ENCODE measurements at regions of chr18 and their contacts with region 1.

Region 1: DNA sequence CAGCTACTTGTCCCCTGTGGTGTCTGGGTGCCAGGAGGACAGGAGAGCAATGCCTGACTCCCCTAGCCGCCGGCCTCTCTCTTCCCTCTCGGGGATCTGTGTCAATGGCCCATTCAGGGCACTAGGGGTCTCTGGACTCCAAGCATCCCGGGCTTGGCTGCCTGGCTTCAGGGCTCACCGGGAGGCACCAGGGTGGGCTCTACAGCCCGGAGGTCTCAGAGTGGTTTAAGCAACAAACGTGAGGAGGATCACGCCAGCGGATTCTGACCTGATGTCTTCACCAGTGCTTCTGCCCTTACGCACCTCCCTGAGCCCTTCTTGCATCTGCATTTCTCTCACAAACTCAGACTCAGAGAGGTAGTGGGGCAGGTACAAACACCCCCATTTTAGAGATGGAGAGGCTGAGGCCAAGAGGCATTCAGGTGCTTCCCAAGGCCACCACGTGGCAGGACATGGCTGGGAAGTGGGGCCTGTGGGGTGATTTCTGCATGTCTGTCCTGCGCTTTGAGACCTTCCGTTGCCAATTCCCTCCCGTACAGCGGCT is 243.0 kb downstream of the CELF4 start:
- DNase-seq: peak; percentile 29 to 85
- H3K4me3 ChIP-seq: no peak overlapping the region
- H3K27ac ChIP-seq: no peak overlapping the region
- H3K4me1 ChIP-seq: peaks cover 0 to 10% (median 5%) of the 10 kb centered on the region in 4 experiments; a peak in 6 of 7 replicates
- H3K27me3 ChIP-seq: no peaks in the 10 kb centered on the region
- CTCF ChIP-seq: peak in 2 of 3 experiments; percentile 83 to 92; a peak in 3 of 4 replicates
- EP300 ChIP-seq: no peak
- POLR2A ChIP-seq: no peak
- RAD21 ChIP-seq: peak; percentile 87 to 92

Region 2: DNA sequence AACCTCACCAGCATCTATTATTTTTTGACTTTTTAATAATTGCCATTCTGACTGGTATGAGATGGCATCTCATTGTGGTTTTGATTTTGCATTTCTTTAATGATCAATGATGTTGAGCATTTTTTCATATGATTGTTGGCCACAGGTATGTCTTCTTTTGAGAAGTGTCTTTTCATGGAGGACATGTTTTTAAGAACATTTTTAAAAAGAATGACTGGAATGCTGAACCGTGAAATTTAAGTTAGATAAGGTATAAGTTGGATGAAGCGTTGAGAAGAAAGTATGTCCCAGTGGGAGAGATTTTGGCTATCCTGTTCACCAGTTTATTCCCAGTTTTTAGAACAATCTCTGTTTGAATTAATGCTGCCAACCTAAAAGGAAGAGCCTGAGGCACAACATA is 122.8 kb before region 1 on chr18:
- CTCF ChIA-PET with region 1: no interaction called
- POLR2A ChIA-PET with region 1: no interaction called
- DNase-seq: no peak
- H3K4me3 ChIP-seq: no peak overlapping the region
- H3K27ac ChIP-seq: no peak overlapping the region
- H3K4me1 ChIP-seq: no peaks in the 10 kb centered on the region
- H3K27me3 ChIP-seq: no peaks in the 10 kb centered on the region
- CTCF ChIP-seq: no peak
- EP300 ChIP-seq: no peak
- POLR2A ChIP-seq: no peak
- RAD21 ChIP-seq: no peak

Region 3: DNA sequence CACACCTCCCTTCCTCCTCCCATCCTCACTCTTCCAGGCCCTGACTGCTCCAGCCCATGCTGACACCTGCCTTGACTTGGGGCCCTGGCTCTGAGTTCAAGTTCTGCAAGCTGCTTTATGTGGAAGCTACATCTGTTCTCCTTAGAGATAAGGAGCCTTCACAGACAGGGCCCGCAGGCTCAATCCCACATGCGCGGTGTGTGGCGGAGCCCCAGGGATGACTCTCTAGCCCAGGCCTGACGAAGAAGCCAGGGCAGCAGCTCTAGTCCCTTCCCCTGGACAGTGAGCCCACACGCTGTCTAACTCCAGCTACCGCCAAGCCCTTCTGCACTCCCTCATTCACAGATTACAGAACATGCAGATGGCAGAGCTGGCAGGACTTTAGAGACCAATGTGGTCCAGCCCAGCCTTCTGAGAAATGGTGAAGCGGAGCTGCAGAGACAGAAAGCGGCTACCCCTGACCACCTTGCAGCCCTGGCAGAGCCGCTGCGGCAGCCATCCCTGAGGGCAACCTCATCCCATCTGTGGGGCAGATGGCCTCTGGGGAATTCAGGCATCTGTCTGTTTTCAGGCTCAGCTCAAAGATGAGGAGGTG is 61.2 kb before region 1 on chr18:
- CTCF ChIA-PET with region 1: interaction called, 11 read pairs
- POLR2A ChIA-PET with region 1: no interaction called
- DNase-seq: no peak
- H3K4me3 ChIP-seq: no peak overlapping the region
- H3K27ac ChIP-seq: no peak overlapping the region
- H3K4me1 ChIP-seq: peaks cover 0 to 4% (median 1%) of the 10 kb centered on the region in 4 experiments; a peak in 2 of 7 replicates
- H3K27me3 ChIP-seq: peaks cover 0 to 2% (median 0%) of the 10 kb centered on the region in 4 experiments; a peak in 2 of 7 replicates
- CTCF ChIP-seq: no peak
- EP300 ChIP-seq: no peak
- POLR2A ChIP-seq: no peak
- RAD21 ChIP-seq: no peak

Region 4: DNA sequence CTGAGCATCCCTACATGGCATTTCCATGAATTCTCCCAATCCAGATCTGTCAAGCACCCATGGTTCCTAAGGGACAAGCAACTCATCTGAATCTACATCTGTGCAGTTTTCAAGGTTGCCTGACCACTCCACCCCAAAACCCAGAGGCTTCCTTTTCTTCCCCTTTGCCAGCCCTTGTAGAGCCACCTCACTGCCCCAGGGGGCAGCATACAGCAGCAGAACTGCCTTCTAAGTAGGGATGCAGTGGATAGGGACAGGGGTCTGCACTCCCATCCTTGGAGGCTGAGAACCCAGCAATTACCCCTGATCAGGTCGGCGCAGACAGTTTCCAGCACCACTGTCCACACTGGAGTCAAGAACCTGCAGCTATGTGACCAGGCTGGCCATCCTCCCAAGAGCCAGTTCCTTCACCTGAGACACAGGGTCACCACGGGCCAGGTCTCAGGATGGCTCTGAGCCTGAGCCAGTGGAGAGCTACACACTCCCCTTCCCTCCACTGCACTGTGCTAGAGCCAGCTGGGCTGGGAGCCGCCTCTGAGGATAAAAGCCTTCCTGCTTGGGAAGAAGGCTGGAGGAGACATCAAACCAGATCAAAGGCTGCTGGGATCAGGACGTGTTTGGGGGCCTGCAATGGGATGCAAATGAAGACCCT is 40.1 kb before region 1 on chr18:
- CTCF ChIA-PET with region 1: interaction called, 12 read pairs
- POLR2A ChIA-PET with region 1: no interaction called
- DNase-seq: no peak
- H3K4me3 ChIP-seq: no peak overlapping the region
- H3K27ac ChIP-seq: no peak overlapping the region
- H3K4me1 ChIP-seq: peaks cover 0 to 3% (median 0%) of the 10 kb centered on the region in 4 experiments; a peak in 2 of 7 replicates
- H3K27me3 ChIP-seq: no peaks in the 10 kb centered on the region; a peak in 1 of 7 replicates
- CTCF ChIP-seq: peak; percentile 76 to 83 (median 82)
- EP300 ChIP-seq: no peak
- POLR2A ChIP-seq: no peak
- RAD21 ChIP-seq: peak; percentile 56 to 71

Region 5: DNA sequence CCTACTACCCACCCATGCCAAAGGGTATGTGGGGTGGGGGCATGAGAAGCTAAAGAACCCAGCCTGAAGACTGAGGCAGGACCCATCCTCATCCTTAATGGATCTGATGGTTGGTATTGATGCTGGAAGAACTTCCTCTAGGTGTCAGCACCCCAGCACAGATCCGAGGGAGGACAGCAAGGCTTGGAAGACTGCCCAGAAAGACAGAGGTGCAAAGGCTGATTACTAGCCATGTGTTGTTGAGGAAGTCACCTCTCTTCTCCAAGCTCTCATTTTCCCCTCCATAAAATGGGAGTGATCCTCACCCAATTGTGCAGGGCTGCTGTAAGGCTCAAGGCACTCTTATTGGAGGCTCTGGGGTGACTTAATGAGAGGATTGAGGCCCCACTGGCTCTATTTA is 13.5 kb before region 1 on chr18:
- CTCF ChIA-PET with region 1: interaction called, 40 read pairs
- POLR2A ChIA-PET with region 1: no interaction called
- DNase-seq: no peak
- H3K4me3 ChIP-seq: no peak overlapping the region
- H3K27ac ChIP-seq: no peak overlapping the region
- H3K4me1 ChIP-seq: peaks cover 0 to 6% (median 0%) of the 10 kb centered on the region in 4 experiments; a peak in 2 of 7 replicates
- H3K27me3 ChIP-seq: no peaks in the 10 kb centered on the region
- CTCF ChIP-seq: peak in 1 of 3 experiments; percentile 9; a peak in 1 of 4 replicates
- EP300 ChIP-seq: no peak
- POLR2A ChIP-seq: no peak
- RAD21 ChIP-seq: 0 out of 4 replicates have a peak, but pooled peaks of 1 of the 2 experiments have one; percentile 3

Region 6: DNA sequence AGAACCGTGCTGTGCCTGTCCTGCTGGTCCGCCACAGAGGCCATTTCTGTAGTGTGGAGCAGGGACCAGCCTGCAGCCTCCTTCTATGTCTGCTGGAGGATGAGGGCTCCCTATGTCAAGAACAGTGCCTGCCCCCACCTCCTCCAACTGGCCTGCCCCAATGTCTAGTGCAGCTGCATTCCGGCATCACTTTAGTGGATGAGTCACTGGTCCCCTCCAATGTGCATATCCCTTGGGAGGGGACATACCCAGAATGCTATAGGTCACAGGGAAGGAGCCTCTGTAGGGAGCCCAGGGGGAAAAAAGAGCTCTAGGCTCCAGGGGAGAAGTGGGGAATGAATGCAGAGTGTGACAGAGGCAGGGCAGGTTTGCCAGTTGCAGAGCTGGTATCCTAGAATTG is 23.5 kb after region 1 on chr18:
- CTCF ChIA-PET with region 1: interaction called, 88 read pairs
- POLR2A ChIA-PET with region 1: interaction called, 3 read pairs
- DNase-seq: no peak
- H3K4me3 ChIP-seq: no peak overlapping the region
- H3K27ac ChIP-seq: no peak overlapping the region
- H3K4me1 ChIP-seq: peaks cover 0 to 5% (median 2%) of the 10 kb centered on the region in 4 experiments; a peak in 6 of 7 replicates
- H3K27me3 ChIP-seq: peaks cover 0 to 3% (median 0%) of the 10 kb centered on the region in 4 experiments; a peak in 1 of 7 replicates
- CTCF ChIP-seq: no peak
- EP300 ChIP-seq: no peak
- POLR2A ChIP-seq: no peak
- RAD21 ChIP-seq: no peak